ENCODE measurements at regions of chr15 and their contacts with region 1.

Region 1: GRCh38 chr15:86743283-86743903 is 663.7 kb downstream of the AGBL1 start:
- DNase-seq: peak; percentile 54 to 67
- H3K4me3 ChIP-seq: no peak overlapping the region
- H3K4me3 Mint-ChIP-seq: no peak overlapping the region
- H3K27ac Mint-ChIP-seq: no peak overlapping the region
- H3K4me1 ChIP-seq: no peaks in the 10 kb centered on the region
- H3K4me1 Mint-ChIP-seq: no peaks in the 10 kb centered on the region
- H3K27me3 ChIP-seq: no peaks in the 10 kb centered on the region
- H3K27me3 Mint-ChIP-seq: no peaks in the 10 kb centered on the region
- CTCF ChIP-seq: peak; percentile 67 to 83

Region 2: DNA sequence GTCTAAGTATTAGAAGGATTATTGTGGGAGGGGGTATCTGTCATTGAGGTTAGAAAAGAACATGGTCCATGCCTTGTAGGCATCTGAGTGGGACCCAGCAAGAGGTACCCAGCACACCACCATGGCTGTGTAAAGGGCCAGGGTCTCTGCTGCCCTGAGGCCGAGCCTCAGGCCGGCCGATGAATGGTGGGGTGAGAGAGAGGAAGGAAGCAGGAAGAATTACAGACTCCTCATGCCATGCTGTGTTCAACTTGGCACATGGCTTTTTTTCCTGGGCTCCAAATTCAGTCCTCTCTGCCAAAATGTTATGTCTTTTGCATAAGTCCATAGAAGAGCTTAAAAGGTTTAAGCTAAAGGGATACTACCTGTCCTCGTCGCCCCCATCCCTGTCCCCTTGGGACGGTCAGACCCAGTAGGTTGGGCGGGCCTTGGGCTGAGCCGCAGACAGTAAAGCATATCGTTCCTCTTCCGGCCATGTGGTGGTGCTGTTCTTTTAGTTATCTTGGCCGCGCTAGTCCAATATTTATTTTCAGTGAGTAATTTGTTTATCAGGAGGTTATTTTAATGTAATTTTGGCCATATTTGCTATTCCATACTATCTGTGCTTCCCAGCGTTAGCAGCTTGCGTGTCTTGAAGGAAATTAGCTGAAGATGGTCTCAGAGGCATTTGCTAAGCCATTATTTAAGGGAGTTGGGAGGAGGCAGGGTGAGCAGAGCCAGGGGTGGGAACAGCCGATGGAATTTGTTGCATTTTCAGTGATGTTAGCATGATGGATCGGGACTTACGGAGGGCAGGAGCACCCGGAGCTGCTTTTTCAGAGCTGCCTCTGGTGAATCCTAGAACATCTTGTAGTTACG is 511.3 kb before region 1 on chr15:
- CTCF ChIA-PET with region 1: no interaction called
- POLR2A ChIA-PET with region 1: no interaction called
- intact Hi-C with region 1: loop called (anchors 1 kb)
- DNase-seq: peak in 1 of 2 experiments; percentile 3
- H3K4me3 ChIP-seq: no peak overlapping the region
- H3K4me3 Mint-ChIP-seq: no peak overlapping the region
- H3K27ac Mint-ChIP-seq: no peak overlapping the region
- H3K4me1 ChIP-seq: no peaks in the 10 kb centered on the region
- H3K4me1 Mint-ChIP-seq: no peaks in the 10 kb centered on the region
- H3K27me3 ChIP-seq: no peaks in the 10 kb centered on the region
- H3K27me3 Mint-ChIP-seq: peaks cover 22% of the 10 kb centered on the region
- CTCF ChIP-seq: peak; percentile 35 to 48

Region 3: DNA sequence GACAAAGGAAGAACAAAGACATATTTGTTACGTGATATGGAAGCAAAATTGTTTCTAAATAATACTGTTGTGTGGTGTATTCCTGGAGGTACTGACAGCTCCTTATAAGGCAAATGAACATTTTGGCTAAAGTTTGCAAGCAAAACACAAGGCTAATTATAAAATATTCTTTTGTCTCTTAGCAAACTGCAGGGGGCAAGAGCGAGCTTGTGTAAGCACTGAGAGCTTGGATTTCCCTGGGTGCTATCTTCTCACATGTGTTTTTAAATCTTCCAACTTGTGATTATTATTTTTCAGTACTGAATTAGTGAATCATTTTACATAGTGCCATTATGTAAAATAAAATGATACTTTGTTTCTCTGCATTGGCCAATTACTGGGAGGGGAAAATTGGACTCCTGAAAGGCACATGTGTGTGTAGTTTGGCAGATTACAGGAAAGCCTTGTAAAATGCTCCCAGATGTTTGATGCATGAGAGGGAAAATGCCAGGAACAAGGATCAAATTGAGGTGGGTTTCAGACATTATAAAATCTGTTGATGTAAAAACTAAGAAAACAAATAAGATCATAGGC is 52.2 kb before region 1 on chr15:
- CTCF ChIA-PET with region 1: interaction called, 4 read pairs
- POLR2A ChIA-PET with region 1: no interaction called
- intact Hi-C with region 1: loop called (anchors 1 kb)
- DNase-seq: no peak
- H3K4me3 ChIP-seq: no peak overlapping the region
- H3K4me3 Mint-ChIP-seq: no peak overlapping the region
- H3K27ac Mint-ChIP-seq: no peak overlapping the region
- H3K4me1 ChIP-seq: no peaks in the 10 kb centered on the region
- H3K4me1 Mint-ChIP-seq: no peaks in the 10 kb centered on the region
- H3K27me3 ChIP-seq: no peaks in the 10 kb centered on the region
- H3K27me3 Mint-ChIP-seq: peaks cover 10% of the 10 kb centered on the region
- CTCF ChIP-seq: no peak

Region 4: GRCh38 chr15:86948517-86949118 is 205.2 kb after region 1 on chr15:
- CTCF ChIA-PET with region 1: no interaction called
- POLR2A ChIA-PET with region 1: no interaction called
- intact Hi-C with region 1: no loop called
- DNase-seq: no peak
- H3K4me3 ChIP-seq: no peak overlapping the region
- H3K4me3 Mint-ChIP-seq: no peak overlapping the region
- H3K27ac Mint-ChIP-seq: no peak overlapping the region
- H3K4me1 ChIP-seq: no peaks in the 10 kb centered on the region
- H3K4me1 Mint-ChIP-seq: no peaks in the 10 kb centered on the region
- H3K27me3 ChIP-seq: no peaks in the 10 kb centered on the region
- H3K27me3 Mint-ChIP-seq: peaks cover 5% of the 10 kb centered on the region
- CTCF ChIP-seq: no peak

Measured in Caco-2 (cell line).